Activated CD8-positive, alpha-beta memory T cell treated with anti-CD3 and anti-CD28 coated beads, Interleukin-2, amount 10 ng/mL, durations not matched to agents 7 days and 5 days (primary cell): ENCODE measurements at regions of chr7 and their contacts with region 1.

Region 1: GRCh38 chr7:151448261-151449252 is 8.6 kb upstream of the CRYGN start:
- DNase-seq: peak; percentile 84
- ATAC-seq: peak; percentile 90
- H3K4me3 Mint-ChIP-seq: peak overlapping the region; percentile 49
- H3K27ac Mint-ChIP-seq: no peak overlapping the region
- H3K4me1 Mint-ChIP-seq: peaks cover 6% of the 10 kb centered on the region
- H3K27me3 Mint-ChIP-seq: peaks cover 28% of the 10 kb centered on the region

Region 2: GRCh38 chr7:151315038-151315655 is 133.4 kb before region 1 on chr7:
- CTCF ChIA-PET with region 1: interaction called, 48 read pairs
- DNase-seq: peak; percentile 88
- ATAC-seq: peak; percentile 92
- H3K4me3 Mint-ChIP-seq: peak overlapping the region; percentile 12
- H3K27ac Mint-ChIP-seq: peak overlapping the region; percentile 54
- H3K4me1 Mint-ChIP-seq: peaks cover 21% of the 10 kb centered on the region
- H3K27me3 Mint-ChIP-seq: no peaks in the 10 kb centered on the region

Region 3: DNA sequence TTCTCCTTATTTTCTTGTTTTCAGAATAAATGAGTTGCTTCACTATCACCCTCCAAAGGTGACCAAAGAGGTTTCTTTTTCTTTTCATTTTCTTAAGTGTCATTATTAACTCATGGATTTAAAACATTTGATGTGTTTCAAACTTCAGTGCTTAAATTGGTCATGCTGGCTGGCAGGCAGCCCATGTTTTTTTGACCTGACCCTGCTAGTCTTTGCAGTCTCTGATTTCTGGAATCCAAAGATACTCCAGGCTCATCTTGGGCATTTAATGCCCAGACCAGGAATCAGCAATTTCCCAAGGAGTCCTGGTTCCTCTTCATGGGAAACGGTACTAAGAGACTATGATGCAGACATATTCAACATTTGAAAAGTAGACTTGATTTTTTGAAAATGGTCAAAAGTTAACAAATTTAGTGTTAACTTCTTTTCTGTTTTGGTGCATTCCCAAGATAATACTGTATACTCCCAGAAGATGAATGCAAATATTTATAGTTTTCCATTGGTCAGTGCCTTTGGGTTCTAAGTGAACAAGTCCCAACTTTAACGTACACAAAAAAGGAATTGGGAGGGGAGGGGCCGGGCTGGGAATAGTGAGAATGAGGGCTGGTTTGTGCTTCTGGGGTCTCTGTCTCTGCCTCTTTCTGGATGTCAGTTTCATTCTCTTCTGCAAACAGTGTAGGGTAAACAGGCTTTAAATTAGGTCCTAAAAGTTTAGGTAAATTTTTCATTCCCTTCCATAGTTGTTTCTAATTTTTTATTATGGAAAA is 87.2 kb before region 1 on chr7:
- CTCF ChIA-PET with region 1: interaction called, 151 read pairs
- DNase-seq: no peak
- ATAC-seq: no peak
- H3K4me3 Mint-ChIP-seq: no peak overlapping the region
- H3K27ac Mint-ChIP-seq: no peak overlapping the region
- H3K4me1 Mint-ChIP-seq: peaks cover 4% of the 10 kb centered on the region
- H3K27me3 Mint-ChIP-seq: no peaks in the 10 kb centered on the region

Region 4: GRCh38 chr7:151381348-151382078 is 67.0 kb before region 1 on chr7:
- CTCF ChIA-PET with region 1: interaction called, 10 read pairs
- DNase-seq: no peak
- ATAC-seq: peak; percentile 53
- H3K4me3 Mint-ChIP-seq: no peak overlapping the region
- H3K27ac Mint-ChIP-seq: no peak overlapping the region
- H3K4me1 Mint-ChIP-seq: peaks cover 9% of the 10 kb centered on the region
- H3K27me3 Mint-ChIP-seq: peaks cover 27% of the 10 kb centered on the region

Region 5: DNA sequence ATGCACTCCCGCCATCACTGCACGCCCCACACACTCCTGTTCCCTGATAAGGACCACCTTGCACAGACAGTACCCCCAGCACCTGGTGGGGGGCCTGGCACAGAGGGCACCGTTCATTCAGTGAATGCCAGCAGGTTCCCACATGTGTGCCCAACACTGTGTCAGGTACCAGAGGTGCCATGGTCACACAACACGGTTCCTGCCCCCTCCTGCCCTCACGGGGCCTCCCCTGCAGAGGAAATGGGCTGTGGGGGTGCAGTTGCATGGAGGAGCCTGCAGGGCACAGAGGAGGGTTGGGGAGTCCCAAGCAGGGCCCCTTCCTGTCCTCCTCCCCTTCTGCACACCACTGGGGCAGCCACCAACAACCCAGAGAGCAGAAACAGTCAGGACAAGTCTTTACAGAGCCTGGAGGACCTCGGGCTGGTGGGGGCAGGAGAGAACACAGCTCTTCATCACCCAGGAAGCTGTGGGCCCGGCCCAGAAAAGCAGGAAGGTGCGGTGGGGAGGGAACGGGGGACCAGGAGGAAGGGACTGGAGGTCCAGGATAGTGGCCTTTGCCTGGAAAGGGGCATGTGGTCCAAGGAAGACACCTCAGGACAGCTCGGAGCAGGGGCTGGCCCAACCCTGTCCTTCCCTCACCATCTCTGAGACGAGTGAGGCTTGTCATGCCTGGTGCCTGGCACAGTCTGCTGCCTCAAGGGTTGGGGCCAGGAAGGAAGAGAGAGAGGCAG is 15.6 kb before region 1 on chr7:
- CTCF ChIA-PET with region 1: interaction called, 23 read pairs
- DNase-seq: peak; percentile 84
- ATAC-seq: peak; percentile 89
- H3K4me3 Mint-ChIP-seq: peak overlapping the region; percentile 33
- H3K27ac Mint-ChIP-seq: peak overlapping the region; percentile 79
- H3K4me1 Mint-ChIP-seq: peaks cover 40% of the 10 kb centered on the region
- H3K27me3 Mint-ChIP-seq: no peaks in the 10 kb centered on the region